ENCODE measurements at regions of chr3 and their contacts with region 1.

Region 1: GRCh38 chr3:99418209-99418635 is 220.2 kb upstream of the COL8A1 start:
- DNase-seq: no peak
- H3K4me3 ChIP-seq: no peak overlapping the region
- CTCF ChIP-seq: no peak

Region 2: DNA sequence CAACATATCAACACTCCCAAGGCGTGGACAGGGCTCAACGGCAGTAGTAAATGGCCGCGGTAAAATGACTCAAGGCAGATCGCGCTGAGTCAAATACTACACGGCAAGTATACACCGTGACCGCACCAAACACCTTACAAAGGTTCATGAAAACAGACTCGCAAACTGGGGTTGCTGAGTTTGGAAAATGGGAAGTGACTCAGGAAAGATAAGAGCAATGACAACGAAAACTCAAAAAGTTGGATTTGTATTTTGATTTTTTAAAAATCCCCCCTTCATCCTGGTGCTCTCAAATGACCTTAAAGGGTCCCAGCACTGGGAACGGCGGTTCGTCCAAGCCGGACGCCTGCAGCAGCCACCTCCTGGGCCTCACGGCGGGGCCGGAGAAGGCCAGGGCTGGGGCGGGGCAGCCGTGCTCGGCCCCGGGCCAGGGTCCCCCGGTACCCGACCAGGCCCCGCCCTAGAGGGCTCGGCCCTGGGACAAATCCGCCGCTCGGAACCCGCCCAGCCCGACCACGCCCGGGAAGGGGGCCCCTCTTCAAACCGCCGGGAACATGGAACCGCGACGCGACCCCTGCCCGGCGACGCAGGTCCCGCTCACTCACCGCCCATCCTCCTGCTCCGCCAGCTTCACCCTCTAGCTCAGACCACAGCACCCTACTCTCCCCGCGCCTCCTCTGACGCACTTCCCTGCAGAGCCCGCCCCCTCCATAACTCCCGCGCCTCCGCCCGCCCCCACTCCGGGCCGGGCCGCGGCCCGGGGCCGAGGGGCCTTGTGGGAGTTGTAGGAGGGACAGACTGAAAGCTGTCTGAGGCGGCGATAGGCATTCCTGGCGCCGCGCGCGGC is 895.8 kb before region 1 on chr3 and contains the start of gene CLDND1:
- in situ Hi-C with region 1: no loop called
- DNase-seq: peak; percentile 89
- H3K4me3 ChIP-seq: peak within 1 kb of the TSS; percentile 65
- CTCF ChIP-seq: no peak

Region 3: GRCh38 chr3:99376926-99377325 is 41.3 kb before region 1 on chr3:
- in situ Hi-C with region 1: loop called (anchors 5 kb)
- DNase-seq: no peak
- H3K4me3 ChIP-seq: no peak overlapping the region
- CTCF ChIP-seq: no peak

Measured in astrocyte of the cerebellum (primary cell).